ENCODE measurements at regions of chr5 and their contacts with region 1.

Region 1: GRCh38 chr5:177317959-177318377 is 6.3 kb upstream of the MXD3 start:
- DNase-seq: peak; percentile 83
- ATAC-seq: peak; percentile 57
- H3K4me3 Mint-ChIP-seq: peak overlapping the region; percentile 17; the same call in 1 of the 2 replicates
- H3K27ac Mint-ChIP-seq: peak overlapping the region; percentile 70
- H3K4me1 Mint-ChIP-seq: peaks cover 11% of the 10 kb centered on the region
- H3K27me3 Mint-ChIP-seq: no peaks in the 10 kb centered on the region
- CTCF ChIP-seq: peak; percentile 72

Region 2: GRCh38 chr5:177271113-177271512 is 46.9 kb before region 1 on chr5:
- CTCF ChIA-PET with region 1: no interaction called
- POLR2A ChIA-PET with region 1: no interaction called
- DNase-seq: no peak
- ATAC-seq: no peak
- H3K4me3 Mint-ChIP-seq: no peak overlapping the region
- H3K27ac Mint-ChIP-seq: peak overlapping the region; percentile 26; the same call in 1 of the 2 replicates
- H3K4me1 Mint-ChIP-seq: peaks cover 11% of the 10 kb centered on the region
- H3K27me3 Mint-ChIP-seq: no peaks in the 10 kb centered on the region
- CTCF ChIP-seq: no peak

Region 3: GRCh38 chr5:177336112-177336511 is 18.1 kb after region 1 on chr5:
- CTCF ChIA-PET with region 1: interaction called, 23 read pairs
- POLR2A ChIA-PET with region 1: no interaction called
- DNase-seq: no peak
- ATAC-seq: peak; percentile 5
- H3K4me3 Mint-ChIP-seq: no peak overlapping the region
- H3K27ac Mint-ChIP-seq: peak overlapping the region; percentile 97
- H3K4me1 Mint-ChIP-seq: peaks cover 41% of the 10 kb centered on the region
- H3K27me3 Mint-ChIP-seq: no peaks in the 10 kb centered on the region
- CTCF ChIP-seq: no peak

Region 4: GRCh38 chr5:177351385-177352329 is 33.7 kb after region 1 on chr5 and contains the start of gene LMAN2:
- CTCF ChIA-PET with region 1: interaction called, 16 read pairs
- POLR2A ChIA-PET with region 1: no interaction called
- DNase-seq: peak; percentile 90
- ATAC-seq: peak; percentile 98
- H3K4me3 Mint-ChIP-seq: peak within 1 kb of the TSS; percentile 98
- H3K27ac Mint-ChIP-seq: peak within 1 kb of the TSS; percentile 100
- H3K4me1 Mint-ChIP-seq: peaks cover 32% of the 10 kb centered on the region
- H3K27me3 Mint-ChIP-seq: peaks cover 28% of the 10 kb centered on the region
- CTCF ChIP-seq: no peak
- total RNA-seq, gene LMAN2: 141 to 162 TPM (median 147 TPM) in 3 replicates

Region 5: DNA sequence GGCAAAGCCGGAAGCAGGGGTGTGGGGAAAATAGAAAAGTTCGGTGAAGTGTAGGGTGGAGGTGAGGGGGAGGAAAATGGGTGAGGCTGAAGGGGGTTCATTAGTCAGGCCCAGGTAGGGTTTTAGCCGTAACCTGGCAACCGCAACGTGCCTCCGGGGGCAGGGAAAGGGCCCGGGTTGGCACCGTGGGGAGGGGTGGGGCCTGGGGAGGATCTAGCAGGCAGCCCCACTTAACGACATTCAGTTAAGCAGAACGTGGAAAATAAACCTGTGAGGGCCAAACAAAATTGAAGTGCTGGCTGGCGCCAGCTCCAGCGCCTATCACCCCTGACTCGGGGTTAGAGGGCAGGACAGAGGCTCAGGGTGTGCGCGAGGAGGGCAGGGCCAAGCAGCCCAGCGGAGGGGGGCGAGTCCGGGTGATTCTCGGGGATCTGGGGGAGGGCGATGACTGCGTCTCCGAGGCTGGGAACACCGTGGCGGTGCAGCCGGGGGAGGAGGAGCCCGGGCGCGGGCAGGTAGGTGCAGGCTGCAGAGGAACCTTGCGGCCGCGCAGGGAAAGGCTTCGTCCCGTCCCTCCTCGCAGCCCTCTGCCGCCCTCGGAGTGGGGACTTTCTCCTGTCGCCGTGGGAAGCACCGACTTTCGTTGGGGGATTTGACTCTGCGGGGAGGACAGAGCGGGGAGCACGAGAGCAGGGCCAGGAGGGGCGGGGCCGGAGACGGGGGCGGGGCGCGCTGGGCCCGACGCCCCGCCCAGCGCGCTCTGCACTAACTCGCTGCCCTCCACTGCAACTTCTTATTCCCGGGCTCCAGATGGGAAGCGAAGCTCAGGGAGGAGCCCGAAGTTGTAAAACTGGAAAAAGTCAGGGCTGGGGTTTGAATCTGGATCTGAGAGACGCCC is 44.9 kb after region 1 on chr5:
- CTCF ChIA-PET with region 1: interaction called, 17 read pairs
- POLR2A ChIA-PET with region 1: interaction called, 5 read pairs
- DNase-seq: peak; percentile 76
- ATAC-seq: peak; percentile 39
- H3K4me3 Mint-ChIP-seq: peak overlapping the region; percentile 76
- H3K27ac Mint-ChIP-seq: peak overlapping the region; percentile 74; the same call in 1 of the 2 replicates
- H3K4me1 Mint-ChIP-seq: peaks cover 40% of the 10 kb centered on the region
- H3K27me3 Mint-ChIP-seq: peaks cover 14% of the 10 kb centered on the region
- CTCF ChIP-seq: no peak